Activated CD4-positive, alpha-beta T cell treated with anti-CD3 and anti-CD28 coated beads for 36 hours (primary cell): ENCODE measurements at regions of chr3 and their contacts with region 1.

Region 1: DNA sequence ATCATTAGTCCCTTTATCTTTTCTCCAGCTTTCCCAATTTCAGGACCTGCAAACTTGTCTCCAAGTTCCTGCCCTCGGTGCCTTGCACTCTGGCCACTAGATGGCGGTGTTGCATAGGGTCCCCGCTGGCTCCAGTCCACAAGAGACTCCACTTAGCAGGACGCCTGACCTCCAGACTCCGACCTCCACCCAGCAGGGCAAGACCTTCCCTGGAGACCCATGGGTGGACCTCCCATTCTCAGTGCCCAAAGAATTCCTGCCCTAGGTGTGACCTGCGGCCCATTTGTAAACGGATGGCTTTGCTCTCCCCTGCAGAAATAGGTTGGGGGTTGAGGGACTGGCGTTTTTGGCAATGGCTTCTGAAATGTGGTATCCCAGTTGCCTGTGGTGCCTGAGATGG is 82.6 kb downstream of the LSM3 start:
- DNase-seq: peak; percentile 87
- ATAC-seq: peak; percentile 85
- H3K4me3 Mint-ChIP-seq: no peak overlapping the region
- H3K27ac Mint-ChIP-seq: no peak overlapping the region
- H3K4me1 Mint-ChIP-seq: no peaks in the 10 kb centered on the region
- H3K27me3 Mint-ChIP-seq: no peaks in the 10 kb centered on the region

Region 2: GRCh38 chr3:14203521-14204079 is 57.6 kb before region 1 on chr3:
- CTCF ChIA-PET with region 1: interaction called, 5 read pairs
- POLR2A ChIA-PET with region 1: no interaction called
- intact Hi-C with region 1: loop called in 1 of 2 experiments (anchors 1 kb)
- DNase-seq: peak; percentile 56
- ATAC-seq: peak; percentile 60
- H3K4me3 Mint-ChIP-seq: no peak overlapping the region
- H3K27ac Mint-ChIP-seq: no peak overlapping the region
- H3K4me1 Mint-ChIP-seq: peaks cover 2% of the 10 kb centered on the region
- H3K27me3 Mint-ChIP-seq: no peaks in the 10 kb centered on the region

Region 3: GRCh38 chr3:14289590-14290461 is 28.6 kb after region 1 on chr3:
- CTCF ChIA-PET with region 1: interaction called, 12 read pairs
- POLR2A ChIA-PET with region 1: no interaction called
- intact Hi-C with region 1: no loop called
- DNase-seq: no peak
- ATAC-seq: no peak
- H3K4me3 Mint-ChIP-seq: no peak overlapping the region
- H3K27ac Mint-ChIP-seq: no peak overlapping the region
- H3K4me1 Mint-ChIP-seq: no peaks in the 10 kb centered on the region
- H3K27me3 Mint-ChIP-seq: peaks cover 2% of the 10 kb centered on the region

Region 4: GRCh38 chr3:14461748-14462324 is 200.6 kb after region 1 on chr3:
- CTCF ChIA-PET with region 1: interaction called, 19 read pairs
- POLR2A ChIA-PET with region 1: no interaction called
- intact Hi-C with region 1: loop called (anchors 2 kb)
- DNase-seq: peak; percentile 64
- ATAC-seq: peak; percentile 23
- H3K4me3 Mint-ChIP-seq: no peak overlapping the region
- H3K27ac Mint-ChIP-seq: peak overlapping the region; percentile 83
- H3K4me1 Mint-ChIP-seq: peaks cover 38% of the 10 kb centered on the region
- H3K27me3 Mint-ChIP-seq: no peaks in the 10 kb centered on the region

Region 5: GRCh38 chr3:14467814-14468620 is 206.8 kb after region 1 on chr3:
- CTCF ChIA-PET with region 1: interaction called, 19 read pairs
- POLR2A ChIA-PET with region 1: no interaction called
- intact Hi-C with region 1: loop called (anchors 1 kb)
- DNase-seq: peak; percentile 58
- ATAC-seq: peak; percentile 28
- H3K4me3 Mint-ChIP-seq: no peak overlapping the region
- H3K27ac Mint-ChIP-seq: no peak overlapping the region
- H3K4me1 Mint-ChIP-seq: peaks cover 6% of the 10 kb centered on the region
- H3K27me3 Mint-ChIP-seq: no peaks in the 10 kb centered on the region

Region 6: GRCh38 chr3:14548321-14548729 is 287.1 kb after region 1 on chr3:
- CTCF ChIA-PET with region 1: interaction called, 3 read pairs
- POLR2A ChIA-PET with region 1: no interaction called
- intact Hi-C with region 1: loop called (anchors 1 kb)
- DNase-seq: peak; percentile 69
- ATAC-seq: peak; percentile 82
- H3K4me3 Mint-ChIP-seq: no peak overlapping the region
- H3K27ac Mint-ChIP-seq: no peak overlapping the region
- H3K4me1 Mint-ChIP-seq: no peaks in the 10 kb centered on the region
- H3K27me3 Mint-ChIP-seq: peaks cover 15% of the 10 kb centered on the region